ENCODE measurements at regions of chr6 and their contacts with region 1.

Region 1: GRCh38 chr6:25266456-25267100 is 12.6 kb upstream of the CARMIL1 start:
- DNase-seq: no peak
- ATAC-seq: no peak
- H3K4me3 ChIP-seq: no peak overlapping the region
- H3K27ac ChIP-seq: no peak overlapping the region
- H3K4me1 ChIP-seq: peaks cover 9% of the 10 kb centered on the region; the same call in 1 of the 3 replicates
- CTCF ChIP-seq: no peak
- EP300 ChIP-seq: no peak
- POLR2A ChIP-seq: no peak
- RAD21 ChIP-seq: no peak

Region 2: DNA sequence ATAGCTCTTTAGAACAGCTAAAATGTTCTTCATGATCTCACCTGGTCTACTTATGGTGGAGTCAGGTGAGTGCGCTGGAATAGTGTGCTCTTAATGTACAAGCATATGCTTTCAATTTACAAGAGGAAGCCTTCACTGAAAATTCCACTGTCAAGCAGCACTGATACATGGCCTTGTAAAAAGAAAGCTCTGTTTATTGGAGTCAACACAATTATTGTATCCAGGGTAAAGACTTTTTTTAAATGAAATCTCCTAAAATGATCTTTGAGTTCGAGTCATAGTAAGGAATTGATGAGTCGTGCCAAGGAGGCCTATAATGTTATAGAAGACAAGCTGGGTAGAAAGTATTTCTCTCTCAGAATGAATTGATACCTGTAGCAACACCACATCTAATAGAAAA is 29.0 kb before region 1 on chr6:
- CTCF ChIA-PET with region 1: no interaction called
- POLR2A ChIA-PET with region 1: no interaction called
- DNase-seq: no peak
- ATAC-seq: no peak
- H3K4me3 ChIP-seq: no peak overlapping the region
- H3K27ac ChIP-seq: no peak overlapping the region
- H3K4me1 ChIP-seq: no peaks in the 10 kb centered on the region
- CTCF ChIP-seq: no peak
- EP300 ChIP-seq: no peak
- POLR2A ChIP-seq: no peak
- RAD21 ChIP-seq: no peak

Region 3: DNA sequence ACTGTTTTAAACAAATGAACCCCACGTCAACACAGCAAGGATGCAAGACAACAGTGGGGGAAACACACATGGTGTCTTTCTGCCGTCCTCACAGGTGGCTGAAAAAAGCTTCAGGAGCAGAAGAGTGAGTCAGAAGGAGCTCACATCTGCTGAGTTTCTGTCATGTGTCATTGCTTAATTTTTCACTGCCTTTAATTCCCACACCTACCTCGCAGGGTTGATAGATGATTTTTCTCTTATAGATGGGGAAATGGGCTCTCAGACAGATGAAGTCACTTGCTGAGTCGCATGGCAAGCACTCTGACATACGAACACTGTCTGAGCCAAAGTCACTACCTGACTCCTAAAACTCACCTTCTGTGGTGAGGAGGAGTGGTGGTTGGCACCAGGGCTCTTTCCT is 15.7 kb before region 1 on chr6:
- CTCF ChIA-PET with region 1: interaction called, 22 read pairs
- POLR2A ChIA-PET with region 1: no interaction called
- DNase-seq: peak in 1 of 2 experiments; percentile 3
- ATAC-seq: peak in 1 of 2 experiments; percentile 34; a peak in 1 of 6 replicates
- H3K4me3 ChIP-seq: no peak overlapping the region
- H3K27ac ChIP-seq: no peak overlapping the region
- H3K4me1 ChIP-seq: no peaks in the 10 kb centered on the region
- CTCF ChIP-seq: no peak
- EP300 ChIP-seq: no peak
- POLR2A ChIP-seq: no peak
- RAD21 ChIP-seq: no peak

Region 4: GRCh38 chr6:25288143-25288917 is 21.8 kb after region 1 on chr6:
- CTCF ChIA-PET with region 1: no interaction called
- POLR2A ChIA-PET with region 1: no interaction called
- DNase-seq: no peak
- ATAC-seq: no peak
- H3K4me3 ChIP-seq: no peak overlapping the region
- H3K27ac ChIP-seq: no peak overlapping the region
- H3K4me1 ChIP-seq: peaks cover 7% of the 10 kb centered on the region; the same call in 2 of the 3 replicates
- CTCF ChIP-seq: no peak
- EP300 ChIP-seq: no peak
- POLR2A ChIP-seq: no peak
- RAD21 ChIP-seq: no peak

Region 5: DNA sequence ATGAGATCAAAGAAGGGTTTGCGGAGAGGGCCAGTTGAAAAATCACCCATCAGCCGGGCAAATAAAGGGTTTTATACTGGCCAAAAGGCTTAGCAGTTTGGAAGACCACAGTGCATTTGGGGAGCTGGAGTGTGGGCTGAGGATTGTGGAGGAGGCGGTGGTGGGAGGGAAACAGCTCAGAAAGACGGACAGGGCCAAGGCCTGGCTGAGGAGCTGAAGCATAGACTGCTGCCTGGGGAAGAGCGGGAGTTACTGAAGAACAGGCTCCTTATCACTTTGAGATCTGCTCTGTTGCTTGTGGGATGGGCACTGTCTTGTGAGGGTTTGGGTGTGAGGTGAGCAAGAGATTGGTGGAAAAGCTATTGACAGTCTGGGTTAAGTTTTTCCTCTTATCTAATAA is 156.8 kb after region 1 on chr6:
- CTCF ChIA-PET with region 1: no interaction called
- POLR2A ChIA-PET with region 1: no interaction called
- DNase-seq: no peak
- ATAC-seq: no peak
- H3K4me3 ChIP-seq: no peak overlapping the region
- H3K27ac ChIP-seq: no peak overlapping the region
- H3K4me1 ChIP-seq: no peaks in the 10 kb centered on the region
- CTCF ChIP-seq: no peak
- EP300 ChIP-seq: no peak
- POLR2A ChIP-seq: no peak
- RAD21 ChIP-seq: no peak

Region 6: DNA sequence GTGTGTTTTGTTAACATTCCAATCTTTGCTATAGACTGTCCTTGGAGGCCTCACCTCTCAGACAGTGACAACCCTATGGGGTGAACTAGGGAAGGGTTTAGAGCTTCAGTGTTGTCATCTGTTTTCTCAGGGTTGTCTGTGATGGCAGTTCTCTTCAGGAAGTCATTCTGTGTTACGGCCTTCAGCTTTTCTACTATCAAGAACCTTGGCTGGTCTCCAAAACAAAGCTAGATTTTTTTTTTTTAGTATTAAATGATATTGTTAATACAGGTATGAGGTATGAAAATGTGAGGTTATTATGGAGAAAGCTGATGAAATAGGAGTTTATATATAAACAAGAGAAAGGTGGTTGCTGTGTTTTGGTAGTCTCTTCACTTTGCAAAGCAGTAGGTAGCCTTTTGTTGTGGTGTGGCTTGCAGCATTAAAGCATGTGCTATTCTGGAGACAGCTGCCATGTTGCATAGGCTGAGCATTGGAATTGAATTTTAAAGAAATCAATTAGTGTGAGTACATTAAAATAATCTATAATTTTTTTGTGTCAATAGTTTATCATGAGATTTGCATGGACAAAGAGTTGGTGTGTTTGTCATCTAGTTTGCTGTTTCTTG is 175.2 kb after region 1 on chr6:
- CTCF ChIA-PET with region 1: no interaction called
- POLR2A ChIA-PET with region 1: no interaction called
- DNase-seq: no peak
- ATAC-seq: no peak
- H3K4me3 ChIP-seq: no peak overlapping the region
- H3K27ac ChIP-seq: no peak overlapping the region
- H3K4me1 ChIP-seq: no peaks in the 10 kb centered on the region
- CTCF ChIP-seq: no peak
- EP300 ChIP-seq: no peak
- POLR2A ChIP-seq: no peak
- RAD21 ChIP-seq: no peak

Region 7: GRCh38 chr6:25490018-25490801 is 223.6 kb after region 1 on chr6:
- CTCF ChIA-PET with region 1: interaction called, 44 read pairs
- POLR2A ChIA-PET with region 1: interaction called, 7 read pairs
- DNase-seq: peak; percentile 31 to 74
- ATAC-seq: peak; percentile 95 to 96
- H3K4me3 ChIP-seq: no peak overlapping the region
- H3K27ac ChIP-seq: peak overlapping the region in 1 of 2 experiments; percentile 66; a peak in 2 of 6 replicates
- H3K4me1 ChIP-seq: peaks cover 3% of the 10 kb centered on the region; the same call in 1 of the 3 replicates
- CTCF ChIP-seq: peak; percentile 74
- EP300 ChIP-seq: no peak
- POLR2A ChIP-seq: no peak
- RAD21 ChIP-seq: peak; percentile 81 to 82

Region 8: DNA sequence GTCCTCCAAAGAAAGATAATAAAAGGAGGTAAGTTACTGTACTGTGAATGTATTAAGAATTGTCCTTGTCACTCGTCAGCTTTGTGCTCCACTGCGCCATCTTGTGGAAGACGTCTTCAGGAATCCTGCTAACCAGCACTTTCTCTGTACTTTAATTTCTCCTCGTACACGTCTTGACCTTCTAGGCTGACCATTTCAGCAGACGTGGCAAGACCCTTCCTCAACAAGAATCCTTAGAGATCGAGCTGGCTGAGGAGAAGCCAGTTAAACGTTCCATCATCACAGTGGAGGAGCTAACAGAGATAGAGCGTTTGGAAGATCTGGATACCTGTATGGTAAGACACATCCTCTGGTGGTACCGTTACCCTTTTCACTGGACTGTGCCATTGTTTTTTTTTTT is 289.9 kb after region 1 on chr6:
- CTCF ChIA-PET with region 1: interaction called, 10 read pairs
- POLR2A ChIA-PET with region 1: no interaction called
- DNase-seq: peak; percentile 15 to 71
- ATAC-seq: peak; percentile 71 to 82; a peak in 4 of 6 replicates
- H3K4me3 ChIP-seq: no peak overlapping the region
- H3K27ac ChIP-seq: no peak overlapping the region
- H3K4me1 ChIP-seq: no peaks in the 10 kb centered on the region
- CTCF ChIP-seq: peak; percentile 74
- EP300 ChIP-seq: no peak
- POLR2A ChIP-seq: no peak
- RAD21 ChIP-seq: peak; percentile 53 to 59